Activated CD8-positive, alpha-beta T cell treated with anti-CD3 and anti-CD28 coated beads for 36 hours (primary cell): ENCODE measurements at regions of chr2 and their contacts with region 1.

Region 1: DNA sequence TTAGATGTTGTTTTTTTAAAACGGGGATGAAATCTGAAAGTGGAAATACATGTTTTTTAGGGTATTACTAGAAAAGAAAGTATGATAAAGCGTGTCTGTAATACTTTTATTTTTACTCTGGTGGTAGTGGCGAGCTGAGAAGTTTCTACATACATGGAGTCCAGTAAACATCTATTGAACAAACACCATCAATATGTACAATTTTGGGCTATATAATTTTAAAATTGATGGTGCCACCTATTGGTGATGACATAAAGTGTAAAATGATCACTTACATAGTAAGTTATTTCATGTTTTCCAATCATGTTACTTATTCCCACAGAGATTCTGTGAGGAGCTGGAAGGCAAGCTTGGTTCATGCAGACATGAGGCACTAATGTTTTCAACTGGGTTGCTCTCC is 31.5 kb upstream of the NFE2L2 start:
- DNase-seq: no peak
- ATAC-seq: peak; percentile 64
- H3K4me3 Mint-ChIP-seq: no peak overlapping the region
- H3K27ac Mint-ChIP-seq: no peak overlapping the region
- H3K4me1 Mint-ChIP-seq: peaks cover 15% of the 10 kb centered on the region
- H3K27me3 Mint-ChIP-seq: no peaks in the 10 kb centered on the region
- CTCF ChIP-seq: no peak

Region 2: DNA sequence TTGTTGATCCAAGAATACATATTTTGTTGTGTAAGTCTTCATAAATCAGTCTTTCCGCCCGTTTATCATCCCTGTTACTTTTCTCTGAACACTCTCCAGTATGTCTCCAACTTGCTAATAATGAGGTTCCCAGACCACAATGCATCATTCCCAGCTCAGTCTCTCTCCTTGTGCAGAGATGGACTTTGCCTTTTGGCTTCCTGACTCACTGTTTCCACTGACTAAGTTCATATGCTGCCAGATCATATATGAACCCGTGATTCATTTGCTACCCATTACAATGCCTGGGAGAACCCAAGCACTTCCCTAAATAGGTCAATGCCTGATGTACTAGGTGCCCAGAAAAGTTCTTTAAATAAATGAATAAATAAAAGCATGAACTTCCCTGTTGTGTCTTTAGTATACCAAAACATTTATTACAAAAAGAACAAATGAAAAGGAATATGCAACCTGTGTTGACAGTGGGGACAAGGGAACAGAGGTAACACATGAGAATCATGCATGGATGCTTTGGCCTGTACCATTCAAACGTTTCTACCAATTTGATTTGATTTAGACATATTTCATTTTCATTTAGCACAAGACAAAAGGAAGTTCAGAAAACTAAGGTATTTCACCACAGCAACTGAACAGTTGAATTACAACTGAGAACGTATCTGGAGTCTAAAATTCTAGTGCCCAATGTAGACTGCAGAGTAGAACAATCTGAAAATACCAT is 298.8 kb before region 1 on chr2:
- CTCF ChIA-PET with region 1: no interaction called
- POLR2A ChIA-PET with region 1: no interaction called
- intact Hi-C with region 1: loop called (anchors 10 kb)
- DNase-seq: peak; percentile 52
- ATAC-seq: peak; percentile 87
- H3K4me3 Mint-ChIP-seq: no peak overlapping the region
- H3K27ac Mint-ChIP-seq: peak overlapping the region; percentile 69
- H3K4me1 Mint-ChIP-seq: peaks cover 25% of the 10 kb centered on the region
- H3K27me3 Mint-ChIP-seq: no peaks in the 10 kb centered on the region
- CTCF ChIP-seq: no peak